ENCODE measurements at regions of chr6 and their contacts with region 1.

Region 1: GRCh38 chr6:112780498-112781096 is 433.5 kb downstream of the RFPL4B start:
- H3K4me3 Mint-ChIP-seq: no peak overlapping the region
- H3K27ac Mint-ChIP-seq: no peak overlapping the region
- H3K4me1 Mint-ChIP-seq: no peaks in the 10 kb centered on the region
- H3K27me3 Mint-ChIP-seq: no peaks in the 10 kb centered on the region

Region 2: DNA sequence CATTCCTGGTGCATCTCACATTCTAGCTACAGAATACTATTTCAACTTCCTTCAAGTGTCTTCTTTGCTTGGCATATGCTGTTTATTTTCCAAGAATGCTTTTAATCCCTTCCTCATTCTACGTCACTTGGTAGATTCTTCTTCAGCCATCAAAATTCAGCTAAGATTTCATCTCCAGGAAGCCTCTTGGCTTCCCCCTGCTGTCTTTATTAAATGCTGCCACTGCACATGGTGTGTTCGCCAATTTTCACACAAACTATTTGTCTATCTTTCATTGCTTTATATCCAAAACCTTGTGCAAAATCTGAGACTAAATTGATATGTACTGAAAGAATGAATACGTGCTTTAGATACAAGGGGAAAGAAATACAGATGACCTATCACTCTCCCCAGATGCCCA is 180.4 kb before region 1 on chr6:
- intact Hi-C with region 1: no loop called
- H3K4me3 Mint-ChIP-seq: no peak overlapping the region
- H3K27ac Mint-ChIP-seq: no peak overlapping the region
- H3K4me1 Mint-ChIP-seq: no peaks in the 10 kb centered on the region
- H3K27me3 Mint-ChIP-seq: no peaks in the 10 kb centered on the region

Region 3: DNA sequence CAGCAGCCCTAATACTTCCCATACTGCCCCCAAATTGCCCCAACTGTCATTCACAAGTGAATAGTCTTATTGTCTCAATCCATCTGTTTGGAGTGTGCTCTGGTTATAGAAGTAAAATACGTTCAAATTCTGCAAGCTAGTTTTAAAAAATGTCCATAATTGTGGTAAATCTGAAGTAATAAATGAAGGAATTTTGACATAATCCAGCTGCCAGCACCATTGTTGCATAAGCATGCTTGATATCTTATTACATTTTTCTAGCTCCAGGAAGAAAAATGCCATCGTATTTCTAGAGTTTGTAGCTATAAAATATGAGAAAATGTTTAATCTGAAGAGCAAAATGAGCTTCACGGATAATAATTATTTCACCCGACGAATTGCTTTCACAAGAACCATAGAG is 231.2 kb after region 1 on chr6:
- intact Hi-C with region 1: no loop called
- H3K4me3 Mint-ChIP-seq: no peak overlapping the region
- H3K27ac Mint-ChIP-seq: no peak overlapping the region
- H3K4me1 Mint-ChIP-seq: no peaks in the 10 kb centered on the region
- H3K27me3 Mint-ChIP-seq: no peaks in the 10 kb centered on the region

Region 4: DNA sequence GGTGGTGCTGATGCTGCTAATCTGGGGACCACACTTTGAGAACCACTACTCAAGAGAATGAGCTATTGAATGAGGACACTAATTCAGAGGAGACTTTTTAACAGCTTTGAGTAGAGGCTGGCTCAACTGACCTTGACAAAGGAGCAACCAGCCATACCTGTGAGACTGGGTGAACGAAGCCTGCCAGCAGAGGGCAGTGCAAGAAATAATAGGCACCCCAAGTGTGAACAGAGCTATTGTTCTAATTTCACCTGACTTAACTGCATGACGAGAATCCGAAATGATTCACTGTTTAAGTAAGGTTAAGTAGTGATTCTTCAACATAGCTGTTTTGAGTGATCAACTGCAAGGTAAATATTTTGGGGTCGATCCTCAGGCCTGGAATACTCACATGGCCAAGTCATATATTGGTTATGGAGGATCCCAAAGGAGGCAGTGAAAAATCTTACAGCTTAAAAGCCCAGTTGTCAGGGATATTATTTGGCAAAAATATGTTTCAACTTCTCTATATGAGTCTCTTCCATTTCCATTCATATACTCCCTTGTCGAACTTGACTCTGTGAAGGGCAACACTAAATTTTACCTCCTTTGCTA is 526.1 kb after region 1 on chr6:
- intact Hi-C with region 1: loop called (anchors 10 kb)
- H3K4me3 Mint-ChIP-seq: no peak overlapping the region
- H3K27ac Mint-ChIP-seq: no peak overlapping the region
- H3K4me1 Mint-ChIP-seq: no peaks in the 10 kb centered on the region
- H3K27me3 Mint-ChIP-seq: peaks cover 3% of the 10 kb centered on the region

Region 5: DNA sequence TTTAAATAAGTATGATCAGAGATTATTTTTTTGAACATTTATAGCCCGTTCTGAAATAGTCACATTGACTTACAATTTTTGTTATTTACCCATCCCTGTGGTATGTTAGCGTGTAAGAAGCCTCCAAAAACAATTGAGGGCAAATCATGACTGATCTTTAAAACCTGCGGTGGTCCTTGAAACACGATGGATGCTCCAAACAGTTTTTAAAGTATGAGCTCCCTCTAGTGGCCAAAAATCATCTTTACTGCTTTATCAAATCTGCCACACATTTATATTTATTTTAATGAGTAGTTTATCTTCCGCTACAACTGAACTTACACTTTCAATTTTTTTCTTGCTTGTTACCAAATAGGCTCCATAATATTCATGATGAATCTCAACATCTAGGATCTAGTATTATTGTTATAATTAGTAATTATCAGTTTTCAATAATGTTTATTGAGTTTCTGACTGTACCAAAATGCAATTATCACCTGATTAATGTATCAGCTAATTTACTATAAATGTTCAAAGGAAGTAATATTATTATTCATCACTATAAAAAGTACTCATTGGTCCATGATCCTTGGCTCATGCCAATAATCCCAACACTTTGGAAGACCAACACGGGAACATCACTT is 1128.7 kb after region 1 on chr6:
- intact Hi-C with region 1: loop called (anchors 1 kb)
- H3K4me3 Mint-ChIP-seq: no peak overlapping the region
- H3K27ac Mint-ChIP-seq: no peak overlapping the region
- H3K4me1 Mint-ChIP-seq: no peaks in the 10 kb centered on the region
- H3K27me3 Mint-ChIP-seq: peaks cover 1% of the 10 kb centered on the region

Region 6: GRCh38 chr6:113936093-113936934 is 1155.7 kb after region 1 on chr6:
- intact Hi-C with region 1: loop called (anchors 2 kb)
- H3K4me3 Mint-ChIP-seq: no peak overlapping the region
- H3K27ac Mint-ChIP-seq: no peak overlapping the region
- H3K4me1 Mint-ChIP-seq: no peaks in the 10 kb centered on the region
- H3K27me3 Mint-ChIP-seq: no peaks in the 10 kb centered on the region